Aorta (tissue), 5 donors: ENCODE measurements at regions of chr15 and their contacts with region 1.

Region 1: DNA sequence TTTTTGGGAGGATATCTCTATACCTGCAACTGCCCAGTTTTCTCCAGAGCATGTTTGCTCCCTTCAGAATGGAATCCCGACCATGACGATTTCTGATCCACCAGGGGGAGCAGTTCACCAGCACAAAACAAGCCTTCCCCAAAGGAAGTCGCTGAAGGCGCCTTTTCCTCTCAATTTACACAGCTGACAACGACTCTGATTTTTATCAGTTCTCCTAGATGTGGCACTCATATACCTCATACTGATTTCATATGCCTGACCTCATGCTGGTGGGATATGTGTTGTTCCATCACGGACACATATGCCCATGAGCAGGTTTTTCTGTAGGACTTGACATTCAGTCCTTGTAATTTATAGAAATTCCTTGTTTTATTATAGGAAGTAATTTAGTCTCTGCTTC is 1028.2 kb downstream of the MCTP2 start:
- DNase-seq: peak; percentile 71 to 78
- ATAC-seq: peak; percentile 92
- H3K4me3 ChIP-seq: no peak overlapping the region
- H3K27ac ChIP-seq: no peak overlapping the region
- H3K4me1 ChIP-seq: peaks cover 0 to 7% of the 10 kb centered on the region in 2 donors
- H3K27me3 ChIP-seq: no peaks in the 10 kb centered on the region

Region 2: GRCh38 chr15:94844538-94845389 is 414.7 kb before region 1 on chr15:
- intact Hi-C with region 1: loop called in 1 of 2 experiments (anchors 10 kb)
- DNase-seq: peak; percentile 62 to 88
- ATAC-seq: peak; percentile 75
- H3K4me3 ChIP-seq: peak overlapping the region; percentile 28 to 29
- H3K27ac ChIP-seq: peak overlapping the region; percentile 84 to 89
- H3K4me1 ChIP-seq: peaks cover 0 to 3% of the 10 kb centered on the region in 2 donors
- H3K27me3 ChIP-seq: no peaks in the 10 kb centered on the region

Region 3: GRCh38 chr15:95141486-95141885 is 118.0 kb before region 1 on chr15:
- intact Hi-C with region 1: no loop called
- DNase-seq: no peak
- ATAC-seq: no peak
- H3K4me3 ChIP-seq: no peak overlapping the region
- H3K27ac ChIP-seq: no peak overlapping the region
- H3K4me1 ChIP-seq: no peaks in the 10 kb centered on the region
- H3K27me3 ChIP-seq: no peaks in the 10 kb centered on the region

Region 4: DNA sequence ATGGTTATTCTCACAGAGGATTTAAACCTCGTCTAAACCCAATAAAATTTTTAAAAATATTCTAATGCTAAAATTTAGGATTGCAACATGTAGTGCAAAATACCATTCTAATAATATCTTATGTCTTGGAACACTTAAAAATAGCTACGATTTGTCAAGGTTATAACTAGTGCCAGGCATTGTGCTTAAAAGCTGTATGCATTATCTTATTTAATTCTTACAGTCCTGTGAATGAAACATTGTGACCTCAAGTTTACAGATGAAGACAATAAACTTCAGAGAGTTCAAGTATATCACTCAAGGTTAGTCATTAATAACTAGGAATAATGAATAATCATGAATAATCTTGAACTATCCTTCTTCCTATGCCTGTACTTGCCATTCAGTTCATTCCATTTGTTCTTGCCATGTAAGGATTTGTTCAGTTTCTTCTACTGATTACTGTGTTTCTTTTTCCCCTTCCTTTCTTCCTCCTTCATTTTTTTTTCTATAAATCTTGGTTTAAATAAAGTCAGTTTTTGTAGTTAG is 173.4 kb after region 1 on chr15:
- intact Hi-C with region 1: loop called in 1 of 2 experiments (anchors 5 kb)
- DNase-seq: no peak
- ATAC-seq: peak; percentile 26
- H3K4me3 ChIP-seq: no peak overlapping the region
- H3K27ac ChIP-seq: peak overlapping the region in 1 of 2 donors; percentile 95
- H3K4me1 ChIP-seq: peaks cover 5 to 7% of the 10 kb centered on the region in 2 donors
- H3K27me3 ChIP-seq: no peaks in the 10 kb centered on the region

Region 5: GRCh38 chr15:95604634-95605036 is 345.1 kb after region 1 on chr15:
- intact Hi-C with region 1: loop called (anchors 5 to 10 kb)
- DNase-seq: no peak
- ATAC-seq: peak; percentile 77
- H3K4me3 ChIP-seq: no peak overlapping the region
- H3K27ac ChIP-seq: no peak overlapping the region
- H3K4me1 ChIP-seq: peaks cover 4% of the 10 kb centered on the region in 2 donors
- H3K27me3 ChIP-seq: no peaks in the 10 kb centered on the region

Region 6: GRCh38 chr15:96321639-96322535 is 1062.4 kb after region 1 on chr15:
- intact Hi-C with region 1: loop called (anchors 5 kb)
- DNase-seq: peak in 1 of 2 donors; percentile 86
- ATAC-seq: peak; percentile 64
- H3K4me3 ChIP-seq: peak overlapping the region; percentile 27 to 70
- H3K27ac ChIP-seq: peak overlapping the region in 1 of 2 donors; percentile 66
- H3K4me1 ChIP-seq: no peaks in the 10 kb centered on the region
- H3K27me3 ChIP-seq: no peaks in the 10 kb centered on the region

Region 7: DNA sequence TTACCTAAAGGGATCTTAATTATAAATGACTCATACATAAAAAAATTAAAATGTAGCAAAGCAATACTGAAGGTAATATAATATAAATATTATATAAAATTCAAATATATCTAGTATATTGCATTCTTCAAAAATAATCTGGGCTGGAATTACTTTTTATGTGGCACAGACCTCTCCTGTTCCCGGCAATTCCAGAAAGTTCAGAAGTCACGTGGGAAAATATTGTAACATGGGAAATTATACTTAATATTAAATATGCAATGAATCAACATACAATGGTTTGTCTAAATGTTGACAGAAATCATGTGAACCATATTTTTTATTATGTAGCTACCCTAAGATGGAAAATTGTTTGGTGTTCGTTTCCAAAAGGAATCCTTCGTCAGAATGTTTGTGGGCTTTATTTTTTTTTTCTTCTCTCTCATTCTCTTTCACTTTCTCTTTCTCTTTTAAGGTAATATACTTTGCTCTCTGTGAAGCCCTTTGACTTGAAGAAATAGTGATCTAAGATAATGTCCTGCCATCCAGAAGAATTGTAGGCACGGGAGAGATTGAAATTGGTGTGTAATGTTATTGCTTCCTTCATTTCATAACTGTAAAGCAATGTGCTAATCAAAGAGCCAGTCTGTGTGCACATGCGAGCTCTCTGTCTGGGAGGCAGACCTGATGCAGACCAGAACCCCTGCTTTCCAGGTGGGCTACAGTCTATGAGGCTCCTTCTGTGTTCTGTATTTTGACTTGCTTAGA is 1630.4 kb after region 1 on chr15:
- intact Hi-C with region 1: loop called in 1 of 2 experiments (anchors 10 kb)
- DNase-seq: no peak
- ATAC-seq: no peak
- H3K4me3 ChIP-seq: peak overlapping the region; percentile 47 to 64
- H3K27ac ChIP-seq: no peak overlapping the region
- H3K4me1 ChIP-seq: no peaks in the 10 kb centered on the region
- H3K27me3 ChIP-seq: no peaks in the 10 kb centered on the region